H1 (cell line): ENCODE measurements at regions of chr17 and their contacts with region 1.

Region 1: GRCh38 chr17:9676742-9677387 is 31.5 kb downstream of the USP43 start:
- DNase-seq: no peak
- H3K4me3 ChIP-seq: no peak overlapping the region
- H3K27ac ChIP-seq: no peak overlapping the region
- H3K4me1 ChIP-seq: no peaks in the 10 kb centered on the region
- H3K27me3 ChIP-seq: no peaks in the 10 kb centered on the region
- CTCF ChIP-seq: no peak
- EP300 ChIP-seq: no peak
- POLR2A ChIP-seq: no peak
- RAD21 ChIP-seq: no peak

Region 2: DNA sequence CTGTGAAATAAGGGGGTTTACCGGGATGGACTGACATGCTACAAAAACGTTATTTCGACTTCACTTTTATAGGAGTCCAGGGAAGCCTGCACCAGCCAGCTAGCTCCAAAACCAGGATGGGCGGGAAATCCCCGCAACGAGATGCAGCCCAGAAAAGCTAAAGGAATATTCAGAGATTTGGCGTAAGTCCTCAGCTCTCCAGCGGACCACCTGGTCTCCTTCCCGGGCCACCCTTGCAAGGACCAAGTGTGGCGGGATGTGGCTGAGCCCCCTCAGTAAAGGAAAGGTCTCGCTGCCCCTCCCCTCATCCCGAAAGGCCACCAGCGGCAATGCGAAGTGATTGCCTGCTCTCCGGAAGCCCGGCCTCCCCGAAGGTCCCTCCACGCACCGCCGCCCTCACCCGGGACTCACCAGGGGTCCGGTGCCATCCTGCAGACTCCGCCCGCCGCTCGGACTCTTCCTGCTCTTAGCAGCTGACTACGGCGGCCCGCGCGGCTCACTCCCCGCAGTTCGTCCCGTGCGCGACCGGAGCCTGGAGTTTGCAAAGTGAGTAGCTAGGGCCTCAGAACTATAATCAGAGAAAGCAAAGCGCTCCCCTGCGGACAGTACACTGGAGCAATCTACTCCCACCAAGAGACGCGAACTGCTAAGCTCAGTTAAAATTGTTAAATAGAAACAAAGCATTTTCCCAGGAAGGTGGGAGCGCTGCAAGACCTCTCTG is 101.3 kb before region 1 on chr17 and contains the start of gene STX8:
- CTCF ChIA-PET with region 1: interaction called, 45 read pairs
- POLR2A ChIA-PET with region 1: no interaction called
- DNase-seq: peak; percentile 43 to 92
- H3K4me3 ChIP-seq: peak within 1 kb of the TSS; percentile 65 to 88 (median 82)
- H3K27ac ChIP-seq: no peak within 1 kb of the TSS
- H3K4me1 ChIP-seq: peaks cover 0 to 4% (median 4%) of the 10 kb centered on the region in 4 experiments; a peak in 4 of 7 replicates
- H3K27me3 ChIP-seq: no peaks in the 10 kb centered on the region; a peak in 1 of 7 replicates
- CTCF ChIP-seq: no peak
- EP300 ChIP-seq: no peak
- POLR2A ChIP-seq: no peak
- RAD21 ChIP-seq: no peak
- total RNA-seq, gene STX8: 42.5 and 44.0 TPM in 2 replicates

Region 3: GRCh38 chr17:9628509-9628908 is 48.4 kb before region 1 on chr17:
- CTCF ChIA-PET with region 1: interaction called, 15 read pairs
- POLR2A ChIA-PET with region 1: no interaction called
- DNase-seq: no peak
- H3K4me3 ChIP-seq: no peak overlapping the region
- H3K27ac ChIP-seq: no peak overlapping the region
- H3K4me1 ChIP-seq: no peaks in the 10 kb centered on the region
- H3K27me3 ChIP-seq: no peaks in the 10 kb centered on the region; a peak in 1 of 7 replicates
- CTCF ChIP-seq: peak in 1 of 3 experiments; percentile 5; a peak in 1 of 4 replicates
- EP300 ChIP-seq: no peak
- POLR2A ChIP-seq: no peak
- RAD21 ChIP-seq: peak in 1 of 2 experiments; percentile 9; a peak in 1 of 4 replicates

Region 4: DNA sequence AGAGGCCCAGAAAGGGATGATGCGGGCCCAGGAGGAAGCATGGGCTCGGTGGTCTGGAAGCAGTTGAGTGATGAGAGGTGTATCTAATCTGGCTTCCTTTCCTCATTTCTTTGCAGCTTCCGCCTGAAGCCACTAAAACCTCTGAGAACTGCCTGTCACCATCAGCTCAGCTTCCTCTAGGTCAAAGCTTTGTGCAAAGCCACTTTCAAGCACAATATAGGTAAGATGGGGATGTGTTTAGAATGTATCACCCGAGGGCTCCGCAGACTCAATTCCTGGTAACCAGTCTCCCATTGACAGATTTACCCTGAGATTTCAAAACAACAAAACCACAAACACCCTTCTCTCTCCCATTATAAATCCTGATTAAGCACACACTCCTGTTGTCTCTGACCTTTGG is 10.3 kb before region 1 on chr17:
- CTCF ChIA-PET with region 1: interaction called, 10 read pairs
- POLR2A ChIA-PET with region 1: no interaction called
- DNase-seq: no peak
- H3K4me3 ChIP-seq: no peak overlapping the region
- H3K27ac ChIP-seq: no peak overlapping the region
- H3K4me1 ChIP-seq: peaks cover 0 to 5% (median under 1%) of the 10 kb centered on the region in 4 experiments; a peak in 3 of 7 replicates
- H3K27me3 ChIP-seq: no peaks in the 10 kb centered on the region
- CTCF ChIP-seq: no peak
- EP300 ChIP-seq: no peak
- POLR2A ChIP-seq: no peak
- RAD21 ChIP-seq: no peak

Region 5: GRCh38 chr17:9714801-9715200 is 37.9 kb after region 1 on chr17:
- CTCF ChIA-PET with region 1: no interaction called
- POLR2A ChIA-PET with region 1: no interaction called
- DNase-seq: no peak
- H3K4me3 ChIP-seq: no peak overlapping the region
- H3K27ac ChIP-seq: no peak overlapping the region
- H3K4me1 ChIP-seq: no peaks in the 10 kb centered on the region
- H3K27me3 ChIP-seq: no peaks in the 10 kb centered on the region
- CTCF ChIP-seq: no peak
- EP300 ChIP-seq: no peak
- POLR2A ChIP-seq: no peak
- RAD21 ChIP-seq: no peak